ENCODE measurements at regions of chr4 and their contacts with region 1.

Region 1: DNA sequence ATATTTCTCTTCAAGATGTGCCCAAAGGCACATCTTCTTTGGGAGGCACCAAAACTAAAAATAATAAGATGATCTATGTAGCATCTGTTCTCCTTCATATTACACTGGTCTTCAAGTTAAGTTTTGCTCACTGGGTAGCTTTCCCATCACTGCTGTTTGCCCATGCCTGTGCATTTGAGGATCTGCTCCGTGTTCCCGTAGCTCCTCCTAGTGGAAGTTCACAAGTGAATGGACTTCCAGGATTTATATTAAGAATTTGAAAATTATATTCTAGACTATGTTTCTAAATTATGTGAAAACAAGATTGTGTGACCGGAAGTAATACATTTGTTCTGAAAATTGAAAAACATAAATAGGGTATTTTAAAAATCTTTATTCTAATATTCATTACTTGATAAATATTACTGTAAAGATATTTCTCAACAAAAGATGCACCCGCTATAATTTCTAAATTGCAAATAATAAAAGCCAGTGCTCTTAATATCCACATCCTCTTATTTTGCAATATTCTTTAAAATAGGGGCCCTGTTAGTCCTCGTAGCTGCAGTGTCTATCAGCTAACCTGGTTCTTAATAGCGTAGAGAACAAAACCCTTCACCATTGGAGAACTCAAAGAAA is 147.7 kb downstream of the RBM46 start:
- DNase-seq: peak; percentile 16 to 42
- H3K4me3 ChIP-seq: no peak overlapping the region
- H3K4me3 Mint-ChIP-seq: no peak overlapping the region
- H3K27ac Mint-ChIP-seq: no peak overlapping the region
- H3K4me1 ChIP-seq: no peaks in the 10 kb centered on the region
- H3K4me1 Mint-ChIP-seq: no peaks in the 10 kb centered on the region
- H3K27me3 ChIP-seq: no peaks in the 10 kb centered on the region
- H3K27me3 Mint-ChIP-seq: peaks cover 3% of the 10 kb centered on the region
- CTCF ChIP-seq: peak in 1 of 2 experiments; percentile 50

Region 2: GRCh38 chr4:154642373-154643009 is 286.3 kb before region 1 on chr4:
- CTCF ChIA-PET with region 1: no interaction called
- POLR2A ChIA-PET with region 1: no interaction called
- intact Hi-C with region 1: loop called (anchors 10 kb)
- DNase-seq: no peak
- H3K4me3 ChIP-seq: no peak overlapping the region
- H3K4me3 Mint-ChIP-seq: no peak overlapping the region
- H3K27ac Mint-ChIP-seq: no peak overlapping the region
- H3K4me1 ChIP-seq: no peaks in the 10 kb centered on the region
- H3K4me1 Mint-ChIP-seq: no peaks in the 10 kb centered on the region
- H3K27me3 ChIP-seq: no peaks in the 10 kb centered on the region
- H3K27me3 Mint-ChIP-seq: peaks cover 3% of the 10 kb centered on the region
- CTCF ChIP-seq: no peak

Region 3: GRCh38 chr4:154854362-154854761 is 74.4 kb before region 1 on chr4:
- CTCF ChIA-PET with region 1: no interaction called
- POLR2A ChIA-PET with region 1: no interaction called
- intact Hi-C with region 1: loop called (anchors 1 kb)
- DNase-seq: no peak
- H3K4me3 ChIP-seq: no peak overlapping the region
- H3K4me3 Mint-ChIP-seq: no peak overlapping the region
- H3K27ac Mint-ChIP-seq: no peak overlapping the region
- H3K4me1 ChIP-seq: no peaks in the 10 kb centered on the region
- H3K4me1 Mint-ChIP-seq: no peaks in the 10 kb centered on the region
- H3K27me3 ChIP-seq: no peaks in the 10 kb centered on the region
- H3K27me3 Mint-ChIP-seq: peaks cover 2% of the 10 kb centered on the region
- CTCF ChIP-seq: peak in 1 of 2 experiments; percentile 6

Region 4: GRCh38 chr4:155629183-155629825 is 700.6 kb after region 1 on chr4:
- CTCF ChIA-PET with region 1: no interaction called
- POLR2A ChIA-PET with region 1: no interaction called
- intact Hi-C with region 1: no loop called
- DNase-seq: no peak
- H3K4me3 ChIP-seq: no peak overlapping the region
- H3K4me3 Mint-ChIP-seq: no peak overlapping the region
- H3K27ac Mint-ChIP-seq: no peak overlapping the region
- H3K4me1 ChIP-seq: no peaks in the 10 kb centered on the region
- H3K4me1 Mint-ChIP-seq: no peaks in the 10 kb centered on the region
- H3K27me3 ChIP-seq: no peaks in the 10 kb centered on the region
- H3K27me3 Mint-ChIP-seq: no peaks in the 10 kb centered on the region
- CTCF ChIP-seq: no peak

Measured in Caco-2 (cell line).